WTC11 (cell line): ENCODE measurements at regions of chr17 and their contacts with region 1.

Region 1: DNA sequence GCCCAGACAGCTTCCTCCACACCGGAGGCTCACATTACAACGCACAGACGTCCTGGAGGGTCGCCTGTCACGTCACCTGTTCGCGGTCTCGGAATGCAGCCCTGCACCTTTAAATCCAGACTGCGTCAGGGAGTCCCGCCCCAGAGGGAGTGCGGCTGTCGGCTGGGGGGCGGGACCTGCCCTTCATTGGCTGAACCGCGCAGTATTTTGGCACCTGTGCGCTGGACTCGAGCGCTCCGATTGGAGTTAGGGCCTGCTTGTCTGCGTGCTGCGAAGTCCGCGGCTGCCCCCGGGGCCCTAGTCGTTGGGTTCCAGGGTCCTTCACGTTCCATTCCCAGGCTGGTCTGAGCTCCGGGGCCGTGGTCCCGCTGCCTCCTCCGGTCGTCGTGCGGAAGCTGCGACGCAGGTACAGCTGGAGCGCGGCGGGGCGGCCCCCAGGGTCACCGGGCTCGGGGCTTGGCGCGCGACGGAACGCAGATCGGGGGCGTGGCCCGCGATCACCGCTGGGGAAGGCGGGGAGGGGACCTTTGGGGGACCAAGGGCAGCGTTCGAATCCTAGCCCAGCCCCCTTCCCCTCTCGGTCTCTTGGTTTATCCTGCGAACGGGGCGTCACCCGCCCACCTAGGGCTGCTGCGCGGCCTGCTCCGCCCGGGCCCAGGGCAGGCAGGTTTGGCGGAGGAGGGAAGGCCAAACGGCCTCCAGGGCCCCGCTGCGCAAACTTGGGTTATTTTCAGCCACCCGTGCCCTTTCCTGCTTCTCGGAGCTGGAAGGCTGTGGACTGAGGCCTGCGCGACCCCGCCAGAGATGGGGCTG is at the start of gene MIEF2:
- DNase-seq: peak; percentile 98
- ATAC-seq: peak; percentile 85
- H3K4me3 Mint-ChIP-seq: peak within 1 kb of the TSS; percentile 77
- H3K27ac Mint-ChIP-seq: peak within 1 kb of the TSS; percentile 93
- H3K4me1 Mint-ChIP-seq: peaks cover 29% of the 10 kb centered on the region
- H3K27me3 Mint-ChIP-seq: no peaks in the 10 kb centered on the region
- CTCF ChIP-seq: no peak
- total RNA-seq, gene MIEF2: 15.7 to 18.8 TPM (median 17.9 TPM) in 3 replicates

Region 2: DNA sequence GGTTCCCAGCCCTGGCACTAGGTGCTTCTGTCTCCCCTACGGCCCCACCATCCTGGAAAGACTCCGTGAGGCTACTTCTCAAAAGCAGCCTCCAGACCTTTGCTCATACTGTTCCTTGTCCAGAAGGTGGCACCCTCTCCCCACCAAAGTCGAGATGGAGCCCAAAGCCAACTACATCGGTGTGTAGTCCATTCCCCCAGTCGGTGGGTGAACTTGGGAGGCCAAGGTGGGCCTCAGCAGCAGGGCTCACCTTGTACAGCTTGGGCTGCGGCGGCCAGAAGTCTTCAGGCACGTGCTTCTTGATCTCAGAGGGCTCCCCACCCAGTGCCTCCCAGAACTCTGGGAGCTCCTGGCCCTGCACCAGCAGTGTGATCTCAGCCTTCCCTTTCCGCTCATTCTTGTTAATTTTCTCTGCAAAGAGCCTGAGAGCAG is 12.2 kb before region 1 on chr17:
- CTCF ChIA-PET with region 1: interaction called, 15 read pairs
- POLR2A ChIA-PET with region 1: interaction called, 11 read pairs
- DNase-seq: peak; percentile 76
- ATAC-seq: peak; percentile 43
- H3K4me3 Mint-ChIP-seq: peak overlapping the region; percentile 55
- H3K27ac Mint-ChIP-seq: peak overlapping the region; percentile 99
- H3K4me1 Mint-ChIP-seq: peaks cover 25% of the 10 kb centered on the region
- H3K27me3 Mint-ChIP-seq: no peaks in the 10 kb centered on the region
- CTCF ChIP-seq: peak; percentile 50; the same call in 1 of the 2 replicates